HEK293 (cell line): ENCODE measurements at regions of chr12 and their contacts with region 1.

Region 1: GRCh38 chr12:12837025-12837872 is 24.1 kb downstream of the DDX47 start:
- H3K4me3 ChIP-seq: no peak overlapping the region
- H3K27ac ChIP-seq: peak overlapping the region; percentile 22; the same call in 1 of the 2 replicates
- H3K4me1 ChIP-seq: peaks cover 24% of the 10 kb centered on the region
- CTCF ChIP-seq: peak; percentile 31; the same call in 1 of the 2 replicates

Region 2: GRCh38 chr12:12764824-12765223 is 72.4 kb before region 1 on chr12:
- CTCF ChIA-PET with region 1: no interaction called
- POLR2A ChIA-PET with region 1: no interaction called
- H3K4me3 ChIP-seq: no peak overlapping the region
- H3K27ac ChIP-seq: no peak overlapping the region
- H3K4me1 ChIP-seq: no peaks in the 10 kb centered on the region
- CTCF ChIP-seq: no peak

Region 3: DNA sequence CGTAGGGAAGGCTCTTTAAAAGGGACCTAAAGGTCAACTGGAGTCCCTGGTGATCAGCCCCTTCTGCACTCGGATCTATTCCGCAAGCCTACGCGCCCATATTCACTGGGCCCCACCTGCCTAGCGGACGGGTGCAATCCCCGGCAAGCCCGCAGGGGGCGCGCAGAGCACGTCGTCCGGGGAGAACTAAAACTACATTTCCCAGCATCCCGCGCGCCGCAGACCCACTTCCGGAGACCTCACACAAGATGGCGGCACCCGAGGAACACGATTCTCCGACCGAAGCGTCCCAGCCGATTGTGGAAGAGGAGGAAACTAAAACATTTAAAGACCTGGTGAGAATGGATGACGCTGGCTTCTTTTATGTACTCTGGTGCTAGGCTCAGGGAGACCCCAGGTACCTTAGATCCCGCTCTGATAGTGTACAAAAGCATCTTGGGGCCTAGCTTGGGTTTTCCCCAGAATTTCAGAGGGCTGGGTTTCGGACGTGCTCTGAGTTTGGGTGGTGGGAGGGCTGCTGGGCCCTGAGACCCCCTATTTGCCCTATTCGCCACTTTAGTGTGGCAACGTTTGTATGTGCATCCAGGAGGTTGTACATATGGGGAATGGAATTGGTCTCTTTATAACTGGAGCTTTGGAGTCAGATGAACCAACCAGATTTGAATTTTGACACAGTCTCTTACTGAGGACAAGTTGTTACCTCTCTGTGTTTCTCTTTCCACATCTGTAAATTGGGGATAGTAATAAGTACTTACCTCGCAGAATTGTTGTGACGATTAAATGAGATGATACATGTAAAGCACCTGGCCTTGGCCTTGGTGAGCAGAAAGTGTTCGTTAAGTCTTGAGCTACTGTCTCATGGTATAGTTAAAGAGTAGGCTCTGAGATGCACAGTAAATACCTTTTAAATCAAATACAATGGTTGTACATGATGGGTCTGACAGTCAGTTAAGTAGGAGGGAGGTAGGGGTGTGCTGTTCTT is 23.8 kb before region 1 on chr12 and contains the start of gene DDX47:
- CTCF ChIA-PET with region 1: interaction called, 11 read pairs
- POLR2A ChIA-PET with region 1: no interaction called
- H3K4me3 ChIP-seq: peak within 1 kb of the TSS; percentile 85
- H3K27ac ChIP-seq: peak within 1 kb of the TSS; percentile 59
- H3K4me1 ChIP-seq: peaks cover 6% of the 10 kb centered on the region
- CTCF ChIP-seq: peak; percentile 96

Region 4: DNA sequence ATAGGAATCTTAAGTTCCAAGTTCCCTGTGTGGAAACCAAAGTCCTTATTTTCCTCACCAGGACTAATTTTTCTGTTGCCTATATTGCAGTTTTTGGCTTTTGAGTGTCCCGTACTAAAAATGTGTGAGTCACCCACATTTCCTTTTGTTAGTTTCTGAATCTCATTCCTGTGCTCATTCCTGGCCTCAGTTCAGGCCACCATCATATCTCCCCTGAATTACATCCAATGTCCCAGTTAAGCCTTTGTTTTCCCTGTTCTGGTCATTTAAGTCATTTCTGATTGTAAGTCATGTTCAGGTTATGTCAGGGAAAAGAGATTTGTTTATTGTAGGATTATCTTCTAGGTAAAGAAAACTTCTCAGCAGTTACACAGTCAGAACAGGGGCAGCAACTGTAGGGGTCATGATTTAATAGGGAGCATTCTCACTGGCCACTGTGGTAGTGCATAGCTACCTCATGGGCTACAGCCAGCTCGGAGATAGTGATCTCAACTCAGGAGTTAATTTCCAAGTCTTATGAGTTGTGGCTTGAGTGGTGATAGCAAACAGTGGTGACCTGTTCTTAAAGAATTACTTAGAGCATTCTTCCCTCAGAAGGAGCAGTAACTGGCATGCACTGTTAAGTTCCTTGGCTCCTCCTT is 17.5 kb before region 1 on chr12:
- CTCF ChIA-PET with region 1: interaction called, 36 read pairs
- POLR2A ChIA-PET with region 1: interaction called, 11 read pairs
- H3K4me3 ChIP-seq: no peak overlapping the region
- H3K27ac ChIP-seq: no peak overlapping the region
- H3K4me1 ChIP-seq: peaks cover 5% of the 10 kb centered on the region; the same call in 1 of the 2 replicates
- CTCF ChIP-seq: no peak

Region 5: DNA sequence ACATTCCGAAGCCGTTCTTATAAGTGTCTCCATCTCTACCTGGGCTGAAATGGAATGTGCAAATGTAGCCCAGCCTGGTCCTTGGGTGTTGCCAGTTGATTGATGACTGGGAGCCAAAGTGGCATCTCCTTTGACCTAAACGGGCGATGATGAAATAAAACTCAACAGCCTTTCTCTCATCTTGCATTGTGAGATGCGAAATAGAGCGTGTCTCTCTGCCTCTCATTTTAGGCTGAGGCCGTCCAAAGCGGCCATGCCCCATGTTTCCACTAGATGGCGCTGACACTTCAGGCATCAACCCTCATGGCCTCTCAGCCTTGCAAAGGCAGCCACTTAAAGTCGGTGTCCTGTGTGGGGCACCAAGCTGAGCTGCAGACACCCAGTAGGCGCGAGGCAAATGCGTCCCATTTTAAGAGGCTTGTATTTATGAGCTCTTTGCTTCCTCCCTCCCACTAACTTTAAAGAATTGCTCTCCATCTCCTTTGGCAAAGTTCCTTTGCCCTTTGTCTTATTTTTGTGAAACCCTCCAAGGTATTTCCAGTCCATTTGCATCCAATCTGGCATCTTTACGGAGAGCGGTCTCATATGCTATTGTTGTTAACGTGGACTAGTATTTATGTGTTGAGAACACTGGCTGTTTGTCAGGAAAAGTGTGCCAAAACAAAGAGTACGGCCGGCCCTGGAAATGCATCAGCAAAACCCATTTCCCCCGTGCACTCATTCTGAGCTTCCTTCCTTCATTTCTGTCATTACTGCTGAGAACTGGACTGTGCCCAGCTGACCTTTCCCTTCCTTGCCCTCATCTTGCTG is 79.1 kb after region 1 on chr12:
- CTCF ChIA-PET with region 1: interaction called, 32 read pairs
- POLR2A ChIA-PET with region 1: no interaction called
- H3K4me3 ChIP-seq: no peak overlapping the region
- H3K27ac ChIP-seq: no peak overlapping the region
- H3K4me1 ChIP-seq: peaks cover 6% of the 10 kb centered on the region; the same call in 1 of the 2 replicates
- CTCF ChIP-seq: peak; percentile 95